AG04449 (cell line): ENCODE measurements at regions of chr11 and their contacts with region 1.

Region 1: DNA sequence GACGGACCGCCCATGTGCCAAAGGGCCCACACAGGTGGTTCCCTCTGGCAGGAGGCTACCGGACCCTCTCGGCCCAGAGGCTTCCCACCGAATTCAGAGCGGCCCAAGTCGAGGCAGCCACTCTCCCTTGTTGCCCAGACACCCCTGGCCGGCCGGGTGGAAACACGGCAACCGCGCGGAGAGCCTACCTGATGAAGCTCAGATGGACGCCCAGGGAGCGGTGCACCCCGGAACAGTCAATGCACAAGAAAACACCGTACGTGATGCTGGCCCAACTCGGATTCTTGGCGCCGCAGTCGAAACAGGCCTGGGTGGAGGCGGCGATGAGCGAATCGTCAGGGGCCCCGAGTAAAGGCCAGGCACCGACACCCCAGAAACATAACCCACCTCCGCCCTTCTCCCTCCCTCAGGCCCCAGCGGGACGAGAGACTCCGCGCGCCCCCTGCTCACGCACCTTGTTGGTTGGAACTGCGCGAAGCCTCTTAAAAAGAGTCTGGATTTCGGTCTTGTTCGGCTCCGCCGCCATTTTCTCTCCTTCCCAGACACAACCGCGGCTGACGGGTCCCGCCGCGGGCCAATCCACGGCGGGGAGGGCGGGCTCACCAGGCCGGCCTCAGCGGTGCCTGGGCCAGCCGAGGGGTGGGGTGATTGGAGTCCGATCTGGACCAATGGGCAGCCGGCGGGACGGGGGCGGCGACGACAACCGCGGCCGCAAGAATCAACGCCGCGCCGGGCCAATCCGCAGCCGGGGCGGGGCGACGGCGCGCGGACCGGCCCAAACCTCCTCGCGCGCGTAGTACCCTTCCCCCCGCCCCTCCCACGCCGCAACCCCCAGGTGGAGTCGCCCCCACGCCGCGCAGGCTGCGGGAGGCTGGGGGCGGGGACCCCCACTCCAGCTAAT is at the start of gene ARFGAP2:
- DNase-seq: peak; percentile 62
- H3K4me3 ChIP-seq: peak within 1 kb of the TSS; percentile 98
- CTCF ChIP-seq: no peak

Region 2: DNA sequence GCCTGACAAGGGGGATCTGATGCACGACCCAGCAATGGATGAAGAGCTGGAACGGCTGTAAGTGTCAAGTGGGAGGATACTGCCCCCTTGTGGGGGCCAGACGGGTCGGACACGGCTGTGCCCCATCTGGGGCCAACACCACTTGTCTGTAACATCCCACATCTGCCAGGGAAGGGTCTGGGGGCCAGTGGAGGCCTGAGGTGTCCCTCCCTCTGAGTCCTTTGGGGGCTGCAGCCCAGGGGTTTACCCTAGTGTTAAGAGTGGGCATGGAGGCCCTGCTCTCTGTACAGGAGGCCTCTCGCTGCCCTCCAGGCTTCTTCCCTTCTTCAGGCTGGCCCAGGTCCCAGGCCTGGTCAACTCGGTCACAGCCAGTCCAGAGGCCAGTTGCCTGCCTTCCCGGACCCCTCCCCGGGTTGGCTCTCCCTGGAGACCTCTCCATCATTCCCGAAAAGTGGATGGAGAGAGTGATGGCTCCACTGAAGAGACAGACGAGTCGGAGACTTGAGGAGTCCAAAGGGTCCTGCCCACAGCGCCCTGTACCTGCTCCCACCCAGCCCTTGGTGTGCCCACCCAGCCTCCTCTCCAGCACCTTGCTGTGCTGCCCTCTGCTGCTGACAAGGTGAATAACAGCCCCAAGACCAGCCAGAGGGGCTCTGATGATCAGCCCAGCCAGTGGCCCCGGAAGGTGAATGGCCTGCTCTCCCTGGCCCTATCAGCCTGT is 15.3 kb before region 1 on chr11:
- CTCF ChIA-PET with region 1: interaction called, 88 read pairs
- POLR2A ChIA-PET with region 1: no interaction called
- DNase-seq: no peak
- H3K4me3 ChIP-seq: no peak overlapping the region
- CTCF ChIP-seq: peak; percentile 85

Region 3: GRCh38 chr11:47204637-47204989 is 28.0 kb after region 1 on chr11:
- CTCF ChIA-PET with region 1: interaction called, 18 read pairs
- POLR2A ChIA-PET with region 1: interaction called, 3 read pairs
- DNase-seq: no peak
- H3K4me3 ChIP-seq: no peak overlapping the region
- CTCF ChIP-seq: no peak

Region 4: GRCh38 chr11:47213985-47214564 is 37.5 kb after region 1 on chr11:
- CTCF ChIA-PET with region 1: interaction called, 19 read pairs
- POLR2A ChIA-PET with region 1: no interaction called
- DNase-seq: no peak
- H3K4me3 ChIP-seq: peak overlapping the region; percentile 48
- CTCF ChIP-seq: no peak

Region 5: DNA sequence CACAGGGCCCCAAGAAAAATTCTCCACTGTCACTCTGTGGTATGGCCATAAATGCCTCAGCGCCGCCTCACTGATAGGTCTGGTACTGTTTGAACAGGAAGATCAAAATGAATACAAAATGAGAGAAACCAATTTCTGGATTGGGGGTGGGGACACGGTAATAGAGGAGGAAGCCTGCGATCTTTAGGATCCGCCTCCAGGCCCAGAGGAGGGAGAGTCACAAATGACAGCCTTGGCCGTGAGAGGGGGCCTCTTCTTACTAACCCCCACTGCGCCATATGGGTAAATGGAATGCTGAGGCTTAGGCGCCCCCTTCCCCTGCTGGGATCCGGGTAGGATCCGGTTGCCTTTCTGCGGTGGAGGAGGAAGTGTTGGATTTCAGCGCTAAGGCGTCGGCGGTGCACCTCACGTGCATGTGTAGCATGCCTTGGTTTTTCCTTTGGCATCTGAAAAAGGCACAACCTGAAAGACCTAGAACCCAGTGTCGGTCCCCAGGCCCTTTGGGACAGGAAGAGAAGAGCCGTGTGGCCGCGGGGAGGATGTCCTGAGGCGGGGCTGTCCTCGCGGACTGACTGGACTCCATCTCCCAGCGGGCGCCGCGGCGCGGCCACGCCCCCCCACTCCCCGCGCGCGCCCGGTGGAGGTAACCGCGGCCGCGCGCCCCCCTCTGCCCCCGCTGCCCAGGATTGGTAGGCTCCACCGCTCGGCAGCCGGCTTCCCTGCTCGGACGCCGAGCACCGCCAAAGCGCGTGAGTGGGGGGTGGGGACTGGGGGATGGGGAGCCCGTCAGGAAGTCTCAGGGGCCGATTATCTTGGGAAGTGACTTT is 92.6 kb after region 1 on chr11:
- CTCF ChIA-PET with region 1: interaction called, 31 read pairs
- POLR2A ChIA-PET with region 1: no interaction called
- DNase-seq: peak; percentile 44
- H3K4me3 ChIP-seq: peak overlapping the region; percentile 75
- CTCF ChIP-seq: peak; percentile 11